ENCODE measurements at regions of chr17 and their contacts with region 1.

Region 1: GRCh38 chr17:78360371-78361224 is 721 bp upstream of the SOCS3 start:
- DNase-seq: peak; percentile 93
- H3K4me3 Mint-ChIP-seq: peak overlapping the region; percentile 83
- H3K27ac Mint-ChIP-seq: peak overlapping the region; percentile 93
- H3K4me1 Mint-ChIP-seq: peaks cover 48% of the 10 kb centered on the region
- H3K27me3 Mint-ChIP-seq: peaks cover 36% of the 10 kb centered on the region

Region 2: DNA sequence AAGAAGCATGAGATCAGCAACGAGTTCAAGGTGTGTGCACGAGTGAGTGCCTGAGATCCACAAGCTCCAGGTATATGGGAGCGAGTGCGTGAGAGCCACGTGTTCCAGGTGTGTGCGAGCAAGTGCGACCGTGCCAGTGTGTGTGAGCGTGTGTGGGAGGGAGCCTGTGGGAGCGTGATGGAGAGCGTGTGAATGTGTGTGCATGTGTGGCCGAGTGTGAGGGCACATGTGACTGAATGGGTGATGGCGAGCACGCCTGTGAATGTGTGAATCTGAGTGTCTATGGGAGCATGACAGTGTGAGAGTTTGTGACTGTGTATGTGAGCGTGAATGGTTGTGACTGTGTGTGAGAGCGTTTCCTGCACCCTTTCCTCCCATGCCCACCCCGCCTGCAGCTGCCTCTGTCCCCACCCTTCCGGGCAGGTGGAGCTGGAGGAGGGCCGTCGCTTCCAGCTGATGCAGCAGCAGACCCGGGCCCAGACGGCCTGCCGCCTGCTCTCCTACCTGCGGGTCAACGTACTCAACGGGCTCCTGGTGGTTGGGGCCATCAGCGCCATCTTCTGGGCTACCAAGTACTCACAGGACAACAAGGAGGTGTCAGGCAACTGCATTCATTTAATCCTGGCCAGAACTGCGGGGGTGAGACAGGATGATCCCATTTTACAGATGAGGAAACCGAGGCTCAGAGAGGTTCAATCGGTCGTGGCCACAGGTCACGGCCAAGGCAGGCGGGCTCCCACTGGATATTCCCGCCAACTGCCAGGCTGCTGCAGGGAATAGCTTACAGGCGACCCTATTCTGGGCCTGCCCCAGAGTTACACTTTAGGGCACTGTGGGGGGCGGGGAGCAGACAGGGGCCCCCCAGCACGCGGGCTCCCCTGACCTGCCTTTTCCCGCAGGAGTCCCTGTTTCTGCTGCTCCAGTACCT is 226.4 kb before region 1 on chr17:
- CTCF ChIA-PET with region 1: no interaction called
- DNase-seq: peak; percentile 93
- H3K4me3 Mint-ChIP-seq: peak overlapping the region; percentile 79
- H3K27ac Mint-ChIP-seq: peak overlapping the region; percentile 85
- H3K4me1 Mint-ChIP-seq: peaks cover 68% of the 10 kb centered on the region
- H3K27me3 Mint-ChIP-seq: peaks cover 4% of the 10 kb centered on the region

Region 3: GRCh38 chr17:78378225-78379130 is 17.9 kb after region 1 on chr17 and contains the start of gene PGS1:
- CTCF ChIA-PET with region 1: interaction called, 22 read pairs
- DNase-seq: peak; percentile 89
- H3K4me3 Mint-ChIP-seq: peak within 1 kb of the TSS; percentile 93
- H3K27ac Mint-ChIP-seq: peak within 1 kb of the TSS; percentile 87
- H3K4me1 Mint-ChIP-seq: peaks cover 47% of the 10 kb centered on the region
- H3K27me3 Mint-ChIP-seq: peaks cover 12% of the 10 kb centered on the region

Region 4: GRCh38 chr17:78412403-78412802 is 51.8 kb after region 1 on chr17:
- CTCF ChIA-PET with region 1: interaction called, 14 read pairs
- DNase-seq: peak; percentile 62
- H3K4me3 Mint-ChIP-seq: peak overlapping the region; percentile 81
- H3K27ac Mint-ChIP-seq: peak overlapping the region; percentile 99
- H3K4me1 Mint-ChIP-seq: peaks cover 95% of the 10 kb centered on the region
- H3K27me3 Mint-ChIP-seq: no peaks in the 10 kb centered on the region

Region 5: DNA sequence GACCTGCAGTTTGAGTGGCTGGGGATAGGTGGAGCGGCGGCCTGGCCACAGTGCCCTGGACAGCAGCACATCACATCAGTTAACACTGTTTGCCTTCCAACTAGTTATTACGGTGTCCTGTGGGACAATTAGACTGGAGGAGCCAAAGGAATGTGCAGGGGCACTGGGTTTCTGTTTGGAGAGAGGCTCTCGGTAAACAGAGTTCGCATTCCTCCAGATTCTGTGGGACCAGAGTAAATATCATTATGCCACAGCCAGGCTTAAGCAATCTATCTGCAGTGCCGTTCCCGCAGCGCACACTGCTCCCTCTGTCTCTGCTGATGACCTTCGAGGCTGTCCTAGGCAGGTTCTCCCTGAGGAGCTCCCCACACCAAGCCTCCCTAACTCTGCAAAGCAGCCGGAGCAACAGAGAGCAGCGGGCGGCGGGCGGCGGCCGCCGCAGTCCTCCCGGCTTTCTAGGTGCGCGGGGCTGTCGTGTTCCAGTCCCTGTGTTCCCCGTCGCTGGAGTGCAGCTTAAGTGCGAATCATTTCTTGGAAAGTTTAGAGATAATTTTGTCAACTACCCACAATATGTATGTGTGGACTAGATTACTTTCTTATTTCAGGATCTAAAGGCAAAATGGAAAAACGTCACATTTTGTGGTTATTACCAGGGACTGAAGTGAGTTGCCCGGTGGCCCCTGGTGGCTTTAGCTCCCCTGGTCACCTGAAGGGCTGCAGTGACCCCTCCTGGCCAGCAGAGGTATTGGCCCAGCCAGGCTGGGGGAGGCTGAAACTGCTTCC is 61.1 kb after region 1 on chr17:
- CTCF ChIA-PET with region 1: interaction called, 84 read pairs
- DNase-seq: peak; percentile 81
- H3K4me3 Mint-ChIP-seq: no peak overlapping the region
- H3K27ac Mint-ChIP-seq: peak overlapping the region; percentile 67
- H3K4me1 Mint-ChIP-seq: peaks cover 58% of the 10 kb centered on the region
- H3K27me3 Mint-ChIP-seq: no peaks in the 10 kb centered on the region

Region 6: DNA sequence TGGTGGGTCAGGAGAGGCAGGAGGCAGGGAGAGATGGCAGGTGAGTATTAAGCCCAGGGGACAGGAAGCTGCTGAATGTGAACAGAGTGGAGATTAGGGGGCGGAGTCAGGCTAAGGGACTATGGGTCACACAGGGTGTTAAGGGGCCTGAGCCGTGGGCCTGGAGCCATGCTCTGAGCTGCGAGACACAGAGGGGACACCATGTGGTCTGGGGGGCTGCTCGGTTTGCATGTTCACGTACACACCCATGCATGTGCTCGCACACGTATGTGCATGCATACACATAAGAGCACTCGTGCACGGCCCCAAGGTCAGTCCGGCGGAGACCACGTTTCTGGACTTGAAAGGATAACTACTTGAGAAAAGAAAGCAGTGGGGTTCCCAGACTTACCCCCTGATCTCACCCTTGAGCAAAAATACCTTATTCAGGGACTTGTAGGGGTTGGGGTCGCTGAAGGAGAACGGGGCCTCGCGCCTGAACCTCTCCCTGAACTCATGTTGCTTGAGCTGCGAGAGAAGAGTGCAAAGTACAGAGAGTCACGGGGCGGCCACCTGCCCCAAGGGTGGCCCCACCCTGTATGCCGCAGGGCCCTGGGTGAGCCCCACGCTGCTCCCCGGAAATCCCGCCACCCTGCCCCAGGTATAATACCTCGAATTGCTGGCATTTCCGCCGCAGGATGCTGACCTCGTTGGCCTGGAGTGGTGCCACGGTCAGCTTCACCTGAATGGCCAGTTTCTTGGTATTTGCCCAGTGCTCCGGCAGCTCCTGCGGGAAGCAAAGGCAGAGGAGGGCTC is 165.8 kb after region 1 on chr17:
- CTCF ChIA-PET with region 1: no interaction called
- DNase-seq: no peak
- H3K4me3 Mint-ChIP-seq: no peak overlapping the region
- H3K27ac Mint-ChIP-seq: no peak overlapping the region
- H3K4me1 Mint-ChIP-seq: peaks cover 2% of the 10 kb centered on the region
- H3K27me3 Mint-ChIP-seq: peaks cover 35% of the 10 kb centered on the region

Region 7: GRCh38 chr17:78544881-78545755 is 184.5 kb after region 1 on chr17:
- CTCF ChIA-PET with region 1: no interaction called
- DNase-seq: no peak
- H3K4me3 Mint-ChIP-seq: no peak overlapping the region
- H3K27ac Mint-ChIP-seq: no peak overlapping the region
- H3K4me1 Mint-ChIP-seq: peaks cover 5% of the 10 kb centered on the region
- H3K27me3 Mint-ChIP-seq: peaks cover 12% of the 10 kb centered on the region